Dendritic cell treated with granulocyte-macrophage colony-stimulating factor and Interleukin-4, amounts not matched to agents 40 ng/mL and 50 ng/mL, for 4 days (primary cell): ENCODE measurements at regions of chr2 and their contacts with region 1.

Region 1: DNA sequence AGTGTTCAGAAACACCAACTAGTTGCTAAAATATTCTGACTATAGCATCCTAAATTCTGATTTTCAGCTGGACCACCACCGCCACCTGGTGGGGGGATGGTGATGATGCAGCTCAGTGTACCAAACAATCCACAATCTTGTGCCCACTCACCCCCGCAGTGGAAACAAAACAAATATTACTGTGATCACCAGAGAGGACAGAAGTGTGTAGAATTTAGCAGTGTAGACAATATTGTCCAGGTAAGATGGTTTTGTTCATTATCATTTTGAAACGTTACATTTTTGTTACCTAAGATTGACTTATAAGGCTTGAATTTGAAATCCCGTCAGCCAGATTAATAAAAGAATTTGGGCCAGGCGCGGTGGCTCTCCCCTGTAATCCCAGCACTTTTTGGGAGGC is 31.7 kb upstream of the UBXN4 start:
- H3K4me3 Mint-ChIP-seq: no peak overlapping the region
- H3K27ac Mint-ChIP-seq: no peak overlapping the region
- H3K4me1 Mint-ChIP-seq: no peaks in the 10 kb centered on the region
- H3K27me3 Mint-ChIP-seq: no peaks in the 10 kb centered on the region

Region 2: GRCh38 chr2:135473567-135473966 is 236.4 kb before region 1 on chr2:
- intact Hi-C with region 1: loop called (anchors 1 kb)
- H3K4me3 Mint-ChIP-seq: no peak overlapping the region
- H3K27ac Mint-ChIP-seq: no peak overlapping the region
- H3K4me1 Mint-ChIP-seq: no peaks in the 10 kb centered on the region
- H3K27me3 Mint-ChIP-seq: no peaks in the 10 kb centered on the region

Region 3: GRCh38 chr2:136327162-136327852 is 617.3 kb after region 1 on chr2:
- intact Hi-C with region 1: no loop called
- H3K4me3 Mint-ChIP-seq: no peak overlapping the region
- H3K27ac Mint-ChIP-seq: peak overlapping the region; percentile 90
- H3K4me1 Mint-ChIP-seq: peaks cover 81% of the 10 kb centered on the region
- H3K27me3 Mint-ChIP-seq: no peaks in the 10 kb centered on the region